Activated CD4-positive, alpha-beta T cell treated with anti-CD3 and anti-CD28 coated beads for 36 hours (primary cell): ENCODE measurements at regions of chr12 and their contacts with region 1.

Region 1: DNA sequence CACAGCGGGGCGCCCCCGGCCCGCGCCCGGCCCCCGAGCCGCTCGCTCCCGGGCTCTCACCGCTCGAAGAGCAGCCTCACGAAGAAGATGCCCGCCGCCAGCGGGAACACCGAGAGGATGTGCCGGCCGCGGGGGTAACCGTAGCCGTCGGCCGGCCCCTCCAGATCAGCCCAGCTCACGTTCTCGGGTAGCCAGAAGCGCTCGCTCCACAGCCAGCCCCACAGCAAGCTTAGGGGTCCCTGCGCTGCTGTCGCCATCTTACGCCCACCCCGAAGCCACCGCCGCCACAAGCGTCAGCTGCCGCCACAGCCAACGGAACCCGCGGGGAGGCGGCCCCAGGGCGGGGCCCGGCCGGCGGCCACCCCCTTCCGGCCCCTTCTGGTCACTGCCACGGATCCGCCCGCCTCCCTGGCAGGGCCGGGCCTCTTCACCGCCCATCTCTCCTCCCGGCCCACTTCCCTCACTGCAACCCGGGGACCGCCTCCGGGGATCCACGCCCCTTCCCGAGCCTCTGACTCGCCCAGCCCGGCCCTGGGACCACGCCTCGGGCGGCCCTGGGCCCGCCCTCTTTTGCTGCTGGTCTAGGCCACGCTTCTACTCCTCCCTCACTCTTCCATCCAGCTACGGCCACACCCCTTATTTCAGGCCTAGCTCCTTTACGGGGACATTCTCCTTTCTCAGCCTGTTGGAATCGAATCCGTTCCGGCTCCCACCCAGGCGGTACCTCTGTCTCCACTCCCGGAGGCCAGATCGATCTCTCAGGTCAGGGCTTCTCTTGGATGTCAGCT is at the start of gene CERS5:
- DNase-seq: peak; percentile 99
- ATAC-seq: peak; percentile 99
- H3K4me3 Mint-ChIP-seq: peak within 1 kb of the TSS; percentile 85
- H3K27ac Mint-ChIP-seq: peak within 1 kb of the TSS; percentile 96
- H3K4me1 Mint-ChIP-seq: peaks cover 27% of the 10 kb centered on the region
- H3K27me3 Mint-ChIP-seq: no peaks in the 10 kb centered on the region
- total RNA-seq, gene CERS5: 49.4 to 64.4 TPM

Region 2: DNA sequence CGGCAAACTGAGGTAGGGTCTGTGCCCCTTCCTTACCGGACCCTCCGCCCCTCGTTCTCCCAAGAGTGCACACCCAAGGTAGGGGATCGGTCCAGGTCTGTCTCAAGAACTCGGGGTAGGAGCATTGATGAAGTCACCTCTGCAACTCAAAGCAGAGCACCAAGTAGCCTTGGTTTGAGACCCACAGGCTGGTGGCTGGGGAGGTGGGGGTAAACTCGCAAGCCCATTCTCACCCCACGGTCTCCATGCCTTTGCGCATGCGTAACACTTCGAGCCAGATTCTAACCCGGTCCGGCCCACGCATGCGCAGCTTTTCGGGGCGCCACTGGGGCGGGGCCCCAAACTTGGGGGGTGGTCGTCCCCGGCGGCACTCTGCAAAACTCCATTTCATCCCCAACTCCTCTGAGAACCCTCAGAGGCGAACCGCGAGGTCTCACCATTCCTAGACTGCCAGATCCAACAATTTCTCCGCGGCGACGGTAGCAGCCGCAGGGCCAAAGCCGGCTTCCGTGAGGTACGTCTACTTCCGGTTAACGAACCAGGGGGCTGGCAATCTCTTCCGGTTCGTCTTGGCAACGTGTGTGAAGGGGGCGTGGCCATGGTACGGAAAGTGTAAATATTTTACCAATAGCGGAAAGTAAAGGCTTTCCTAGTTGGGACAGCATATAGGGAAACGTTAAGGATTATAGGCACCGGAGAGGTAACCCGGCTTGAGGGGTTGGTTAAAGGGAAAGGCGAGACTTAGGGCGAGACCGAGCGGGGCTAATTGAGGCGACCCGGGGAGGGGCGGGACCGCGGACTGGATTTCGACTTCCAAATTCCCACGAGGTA is 599.4 kb before region 1 on chr12 and contains the start of gene MCRS1:
- CTCF ChIA-PET with region 1: no interaction called
- POLR2A ChIA-PET with region 1: no interaction called
- intact Hi-C with region 1: loop called in 1 of 2 experiments (anchors 1 kb)
- DNase-seq: peak; percentile 93
- ATAC-seq: peak; percentile 88
- H3K4me3 Mint-ChIP-seq: peak within 1 kb of the TSS; percentile 90
- H3K27ac Mint-ChIP-seq: peak within 1 kb of the TSS; percentile 95
- H3K4me1 Mint-ChIP-seq: peaks cover 37% of the 10 kb centered on the region
- H3K27me3 Mint-ChIP-seq: no peaks in the 10 kb centered on the region
- total RNA-seq, gene MCRS1: 48.2 to 58.2 TPM

Region 3: DNA sequence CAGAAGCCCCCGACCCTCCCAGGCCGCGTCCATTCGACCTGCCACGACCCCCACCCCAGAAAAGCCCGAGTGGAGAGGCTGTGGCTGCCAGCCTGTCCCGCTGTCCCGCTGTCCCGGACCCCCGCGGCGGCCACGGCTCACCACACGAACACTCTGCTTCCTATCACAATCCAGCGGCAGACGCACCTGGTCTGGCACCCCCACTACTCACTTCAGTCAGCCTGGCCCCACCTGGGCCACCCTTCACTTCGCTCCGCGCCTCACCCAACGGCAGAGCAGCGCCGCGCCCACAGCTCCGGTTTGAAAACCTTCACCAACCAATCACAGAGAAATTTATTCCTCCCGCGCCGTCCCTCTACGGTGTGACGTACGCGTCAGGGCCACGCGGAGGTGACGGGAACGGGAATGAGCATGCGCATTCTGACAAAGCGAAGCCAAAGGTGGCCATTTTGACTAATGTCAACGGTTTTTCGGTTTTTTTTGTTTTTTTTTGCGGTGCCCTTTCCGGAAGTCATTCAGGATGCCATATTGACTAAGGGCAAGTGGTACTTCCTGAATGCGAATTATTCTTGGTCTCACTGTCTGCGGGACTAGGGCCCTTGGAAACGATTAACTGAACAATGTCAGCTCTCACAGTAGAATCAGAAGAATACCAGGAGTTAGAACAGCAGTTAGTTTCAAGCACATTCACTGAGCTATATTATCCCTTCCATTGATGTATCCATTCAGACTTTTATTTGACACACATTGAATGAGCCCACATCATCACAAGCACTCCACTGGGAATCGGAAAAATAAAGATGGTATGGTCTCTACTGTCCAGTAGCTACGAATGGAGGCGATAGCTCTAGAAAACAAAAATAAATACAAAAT is 141.8 kb before region 1 on chr12 and contains the start of gene RACGAP1:
- CTCF ChIA-PET with region 1: no interaction called
- POLR2A ChIA-PET with region 1: no interaction called
- intact Hi-C with region 1: loop called (anchors 1 kb)
- DNase-seq: peak; percentile 97
- ATAC-seq: peak; percentile 98
- H3K4me3 Mint-ChIP-seq: peak within 1 kb of the TSS; percentile 90
- H3K27ac Mint-ChIP-seq: peak within 1 kb of the TSS; percentile 95
- H3K4me1 Mint-ChIP-seq: peaks cover 23% of the 10 kb centered on the region
- H3K27me3 Mint-ChIP-seq: no peaks in the 10 kb centered on the region
- total RNA-seq, gene RACGAP1: 99.7 to 118 TPM

Region 4: GRCh38 chr12:50132505-50133135 is 34.6 kb before region 1 on chr12:
- CTCF ChIA-PET with region 1: interaction called, 43 read pairs
- POLR2A ChIA-PET with region 1: interaction called, 7 read pairs
- intact Hi-C with region 1: no loop called
- DNase-seq: no peak
- ATAC-seq: peak; percentile 71
- H3K4me3 Mint-ChIP-seq: no peak overlapping the region
- H3K27ac Mint-ChIP-seq: peak overlapping the region; percentile 74
- H3K4me1 Mint-ChIP-seq: peaks cover 6% of the 10 kb centered on the region
- H3K27me3 Mint-ChIP-seq: no peaks in the 10 kb centered on the region

Region 5: GRCh38 chr12:50283229-50283923 is 116.1 kb after region 1 on chr12 and contains the start of gene LIMA1:
- CTCF ChIA-PET with region 1: no interaction called
- POLR2A ChIA-PET with region 1: no interaction called
- intact Hi-C with region 1: loop called in 1 of 2 experiments (anchors 1 kb)
- DNase-seq: peak; percentile 96
- ATAC-seq: peak; percentile 98
- H3K4me3 Mint-ChIP-seq: peak within 1 kb of the TSS; percentile 91
- H3K27ac Mint-ChIP-seq: peak within 1 kb of the TSS; percentile 88
- H3K4me1 Mint-ChIP-seq: peaks cover 20% of the 10 kb centered on the region
- H3K27me3 Mint-ChIP-seq: no peaks in the 10 kb centered on the region
- total RNA-seq, gene LIMA1: 69.7 to 90.4 TPM